ENCODE measurements at regions of chr4 and their contacts with region 1.

Region 1: DNA sequence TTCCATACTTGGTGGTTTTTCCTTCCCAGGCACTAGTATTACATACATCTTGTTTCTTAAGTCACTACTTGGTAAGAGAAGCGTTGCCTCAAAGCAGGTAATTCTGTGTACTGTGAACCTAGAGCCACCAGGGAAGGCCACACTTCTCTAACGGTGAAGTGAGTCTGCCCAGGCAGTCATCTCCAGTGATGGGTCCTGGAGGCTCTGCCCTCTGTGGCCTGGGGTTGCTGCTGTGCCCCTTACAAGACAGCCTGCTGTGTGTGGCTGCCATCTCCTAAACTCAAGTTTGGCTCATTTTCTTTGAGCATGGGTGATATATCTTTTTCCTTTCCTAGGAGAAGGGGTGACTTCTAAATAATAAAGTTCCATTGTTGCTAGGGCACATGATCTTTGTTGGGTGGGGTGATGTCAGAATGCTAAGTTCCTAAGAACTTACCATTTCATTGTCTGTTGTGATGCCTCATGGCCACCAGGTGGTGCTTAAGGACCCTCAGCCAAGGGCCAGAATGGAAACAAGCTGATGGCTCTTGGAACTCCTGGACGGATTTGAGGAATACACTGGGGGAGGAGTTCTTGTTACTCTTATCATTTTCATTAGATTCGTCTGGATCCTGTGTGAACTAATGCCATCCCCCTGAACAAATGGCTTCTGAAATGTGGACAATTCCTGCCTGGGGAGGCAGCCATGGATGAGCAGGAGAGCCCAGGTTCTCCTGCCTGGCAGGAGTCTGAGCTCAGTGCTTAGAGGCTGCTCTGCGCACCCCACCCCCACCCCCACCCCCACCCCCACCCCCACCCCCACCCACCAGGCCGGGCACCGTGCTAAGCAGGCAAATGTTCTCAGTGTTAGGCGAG is 41.1 kb upstream of the WDR1 start:
- DNase-seq: peak; percentile 37 to 38
- ATAC-seq: peak; percentile 59

Region 2: DNA sequence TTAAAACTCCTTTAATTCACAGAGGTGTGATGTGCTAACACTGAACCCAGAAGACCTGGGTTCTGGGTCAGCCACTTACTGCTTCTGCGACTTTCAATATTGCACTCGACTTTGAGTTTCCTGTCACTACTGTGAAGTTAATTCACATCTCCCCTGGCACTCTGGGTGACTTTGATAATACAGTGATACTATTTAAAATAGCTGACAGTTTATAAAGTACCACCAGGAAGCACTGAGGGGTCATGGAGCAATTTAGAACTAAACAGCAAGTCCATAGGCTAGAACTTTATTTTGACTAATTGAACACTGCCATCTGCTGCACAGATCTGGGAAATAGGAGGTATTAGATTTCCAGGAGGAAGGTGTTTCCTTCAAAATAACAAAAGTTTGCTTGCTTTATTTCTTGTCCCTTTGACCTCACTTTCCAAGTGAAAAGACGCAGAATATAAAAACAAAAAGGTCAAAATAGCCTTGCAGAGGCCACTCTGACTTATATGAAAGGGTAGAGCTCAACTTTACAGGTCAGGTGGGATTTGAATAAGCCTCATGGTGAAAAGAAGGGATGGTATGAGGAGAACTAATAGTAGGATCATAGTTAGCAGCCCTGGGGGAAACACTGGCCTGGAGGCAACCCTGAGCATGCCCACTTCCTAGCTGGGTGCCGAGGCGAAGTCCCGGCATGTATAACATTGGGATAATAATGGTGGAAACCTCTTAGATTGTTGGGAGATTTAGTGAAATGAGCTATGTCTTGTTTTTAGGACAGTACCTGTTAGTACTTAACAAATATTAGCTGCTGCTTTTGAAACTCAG is 246.1 kb after region 1 on chr4:
- intact Hi-C with region 1: loop called in 1 of 2 experiments (anchors 10 kb)
- DNase-seq: peak in 1 of 2 donors; percentile 16
- ATAC-seq: peak; percentile 76

Region 3: GRCh38 chr4:10554694-10555093 is 397.0 kb after region 1 on chr4:
- intact Hi-C with region 1: loop called in 1 of 2 experiments (anchors 10 kb)
- DNase-seq: peak in 1 of 2 donors; percentile 54
- ATAC-seq: peak; percentile 75